Calu3 (cell line): ENCODE measurements at regions of chr17 and their contacts with region 1.

Region 1: DNA sequence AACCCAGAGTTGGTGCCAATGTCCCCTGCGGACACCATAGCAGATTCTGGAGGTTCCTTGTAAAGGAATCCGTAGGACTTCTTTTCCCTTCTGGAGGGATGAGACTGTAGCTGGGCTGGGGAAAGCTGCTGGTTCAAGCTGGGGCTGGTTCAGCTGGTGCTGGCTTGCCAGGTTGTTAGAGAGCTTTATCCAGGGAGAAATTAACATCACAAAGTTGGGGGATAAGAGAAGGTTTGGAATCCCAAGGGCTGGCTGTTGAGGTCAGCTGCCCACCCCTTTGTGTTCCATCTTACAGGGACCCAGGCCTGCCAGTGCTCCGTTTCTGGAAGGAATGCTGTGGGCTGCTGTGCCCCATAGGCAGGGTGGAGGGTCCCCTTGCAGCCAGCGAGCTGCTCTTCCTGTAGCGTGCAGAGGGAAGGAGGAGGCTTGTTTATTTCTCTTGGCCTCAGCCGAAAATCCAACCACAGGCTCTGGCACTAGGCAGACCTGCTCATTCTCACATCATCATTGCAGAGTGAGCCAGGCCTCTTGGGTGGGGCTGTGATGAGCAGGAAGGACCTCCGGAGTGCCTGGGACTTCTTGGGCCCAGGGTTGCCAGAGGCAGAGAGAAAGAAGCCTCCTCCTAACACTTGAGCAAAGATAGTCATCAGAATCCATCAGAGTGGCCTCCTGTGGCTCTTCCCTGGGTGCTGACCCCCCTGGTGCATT is 251.1 kb downstream of the SEC14L1 start:
- DNase-seq: peak; percentile 44
- H3K4me3 Mint-ChIP-seq: peak overlapping the region; percentile 42
- H3K27ac Mint-ChIP-seq: peak overlapping the region; percentile 85
- H3K4me1 Mint-ChIP-seq: peaks cover 47% of the 10 kb centered on the region
- H3K27me3 Mint-ChIP-seq: no peaks in the 10 kb centered on the region
- CTCF ChIP-seq: no peak

Region 2: DNA sequence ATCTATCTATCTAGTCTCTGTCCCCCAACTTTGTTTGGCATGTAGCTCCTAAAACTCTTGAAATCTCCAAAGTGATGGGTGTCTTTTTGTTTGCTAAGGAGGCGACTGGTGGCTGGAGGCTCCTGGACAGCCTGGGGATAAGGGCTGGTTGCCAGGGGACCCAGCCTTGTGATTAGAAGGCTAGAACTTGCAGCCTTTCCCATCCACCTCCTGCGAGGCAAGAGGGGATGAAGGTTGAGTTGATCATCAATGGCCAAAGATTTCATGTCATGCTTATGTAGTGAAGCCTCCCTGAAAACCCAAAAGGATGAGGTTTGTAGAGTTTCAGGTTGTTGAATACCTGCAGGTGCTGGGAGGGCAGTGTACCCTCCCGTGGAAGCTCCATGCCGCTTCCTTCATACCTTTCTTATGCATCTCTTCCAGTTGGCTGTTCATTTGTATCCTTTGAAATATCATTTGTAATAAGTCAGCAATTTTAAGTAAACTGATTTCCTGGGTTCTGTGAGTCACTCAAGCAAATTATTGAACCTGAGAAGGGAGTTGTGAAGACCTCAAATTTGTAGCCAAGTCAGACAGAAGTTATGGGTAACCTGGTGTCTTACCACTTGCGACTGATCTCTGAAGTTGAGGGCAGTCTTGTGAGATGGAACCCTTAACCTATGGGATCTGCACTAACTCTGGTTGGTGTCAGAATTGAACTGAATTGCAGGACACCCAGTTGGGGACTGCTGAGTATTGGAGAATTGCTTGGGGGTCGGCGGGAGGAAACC is 48.6 kb before region 1 on chr17:
- CTCF ChIA-PET with region 1: interaction called, 5 read pairs
- intact Hi-C with region 1: loop called (anchors 5 kb)
- DNase-seq: no peak
- H3K4me3 Mint-ChIP-seq: peak overlapping the region; percentile 65
- H3K27ac Mint-ChIP-seq: peak overlapping the region; percentile 95
- H3K4me1 Mint-ChIP-seq: peaks cover 52% of the 10 kb centered on the region
- H3K27me3 Mint-ChIP-seq: no peaks in the 10 kb centered on the region
- CTCF ChIP-seq: no peak

Region 3: DNA sequence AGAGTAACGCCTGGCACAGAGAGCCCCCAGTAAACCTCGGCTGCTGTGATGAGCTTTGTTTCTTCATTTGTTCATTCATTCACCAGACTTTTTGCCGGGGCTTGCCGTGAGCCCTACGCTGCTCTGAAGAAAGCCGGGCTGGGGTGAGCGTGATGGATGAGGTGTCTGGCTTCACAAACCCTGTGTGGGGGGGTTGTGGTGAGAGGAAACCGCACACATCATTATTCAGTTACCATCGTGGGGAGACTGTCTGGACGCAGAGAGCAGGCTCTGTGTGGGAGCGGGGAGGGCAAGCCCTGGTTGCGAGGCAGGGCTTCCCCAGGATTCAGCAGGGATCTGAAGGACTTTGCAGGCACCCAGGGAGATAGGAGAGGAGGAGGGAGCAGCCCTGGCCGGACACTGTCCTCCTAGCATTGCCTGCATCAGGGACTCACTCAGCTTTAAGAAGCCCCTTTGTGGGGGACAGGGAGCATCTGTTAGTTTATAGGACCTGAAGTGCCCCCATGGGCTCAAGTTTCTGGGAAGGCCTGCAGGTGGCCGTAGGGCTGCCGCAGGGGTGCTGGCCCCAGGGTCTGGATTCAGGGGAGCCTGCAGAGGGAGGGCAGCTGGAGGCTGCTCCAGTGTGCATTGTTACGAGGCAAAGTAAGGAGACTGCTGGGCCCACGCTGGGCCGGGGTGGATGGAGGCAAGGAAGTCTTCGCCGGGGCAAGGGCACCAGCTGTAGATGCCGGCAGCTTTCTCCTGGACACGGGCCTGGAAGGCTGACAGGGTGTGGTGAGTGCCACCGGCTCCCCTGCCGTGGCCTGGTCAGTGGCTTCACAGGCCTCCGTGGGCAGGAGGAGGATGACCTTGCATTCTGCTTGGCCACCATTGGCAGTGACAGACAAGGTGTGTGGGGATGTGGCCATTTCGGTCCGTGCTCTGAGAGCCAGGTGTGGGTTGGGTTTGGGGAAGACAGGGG is 83.5 kb after region 1 on chr17:
- CTCF ChIA-PET with region 1: no interaction called
- intact Hi-C with region 1: loop called (anchors 1 kb)
- DNase-seq: no peak
- H3K4me3 Mint-ChIP-seq: peak overlapping the region; percentile 29
- H3K27ac Mint-ChIP-seq: peak overlapping the region; percentile 92
- H3K4me1 Mint-ChIP-seq: peaks cover 64% of the 10 kb centered on the region
- H3K27me3 Mint-ChIP-seq: no peaks in the 10 kb centered on the region
- CTCF ChIP-seq: no peak